Activated T-helper 1 cell treated with anti-CD3 and anti-CD28 coated beads, Interleukin-12 subunit alpha, Interleukin-12 subunit beta, Interleukin-2, Interleukin-4 antibody, amounts not matched to agents 30 ng/mL and 10 ng/mL and 1 ng/mL, durations not matched to agents 14 hours and 24 hours and 36 hours (primary cell): ENCODE measurements at regions of chr17 and their contacts with region 1.

Region 1: DNA sequence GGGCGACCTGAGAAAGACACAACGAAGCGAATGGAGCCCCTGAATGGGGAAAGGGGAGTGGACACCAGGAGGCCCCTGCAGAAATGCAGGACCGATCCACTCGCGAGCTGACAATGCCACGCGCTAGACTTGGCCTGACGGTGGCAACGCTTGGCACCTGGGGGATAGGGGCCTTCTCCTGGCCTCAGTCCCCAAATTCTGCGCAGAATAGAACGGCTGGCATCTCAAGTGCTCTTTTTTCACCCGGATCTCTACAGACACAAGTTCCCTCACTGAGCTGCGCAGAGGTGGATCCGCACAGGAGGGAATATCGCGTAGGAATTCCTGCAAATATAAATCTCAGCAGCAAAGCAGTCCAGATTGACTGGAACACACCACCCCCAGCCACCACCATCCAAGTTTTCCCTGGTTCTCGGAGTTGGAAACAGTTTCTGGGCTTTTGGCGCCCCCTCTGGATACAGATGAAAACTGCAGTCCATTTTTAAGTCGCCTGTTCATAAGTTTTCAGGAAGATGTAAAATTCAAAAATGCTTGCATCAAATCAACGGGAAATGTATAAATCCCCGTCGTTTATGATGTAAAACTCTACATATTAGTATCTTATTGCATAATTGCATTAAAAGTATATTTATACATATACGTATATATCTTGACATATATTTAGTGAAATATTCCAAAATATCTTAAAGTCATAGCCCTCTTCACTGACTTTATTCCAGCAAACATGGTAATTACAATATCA is 2.3 kb upstream of the SOX9 start:
- DNase-seq: no peak
- H3K4me3 Mint-ChIP-seq: no peak overlapping the region
- H3K27ac Mint-ChIP-seq: peak overlapping the region; percentile 23
- H3K4me1 Mint-ChIP-seq: no peaks in the 10 kb centered on the region
- H3K27me3 Mint-ChIP-seq: peaks cover 65% of the 10 kb centered on the region

Region 2: DNA sequence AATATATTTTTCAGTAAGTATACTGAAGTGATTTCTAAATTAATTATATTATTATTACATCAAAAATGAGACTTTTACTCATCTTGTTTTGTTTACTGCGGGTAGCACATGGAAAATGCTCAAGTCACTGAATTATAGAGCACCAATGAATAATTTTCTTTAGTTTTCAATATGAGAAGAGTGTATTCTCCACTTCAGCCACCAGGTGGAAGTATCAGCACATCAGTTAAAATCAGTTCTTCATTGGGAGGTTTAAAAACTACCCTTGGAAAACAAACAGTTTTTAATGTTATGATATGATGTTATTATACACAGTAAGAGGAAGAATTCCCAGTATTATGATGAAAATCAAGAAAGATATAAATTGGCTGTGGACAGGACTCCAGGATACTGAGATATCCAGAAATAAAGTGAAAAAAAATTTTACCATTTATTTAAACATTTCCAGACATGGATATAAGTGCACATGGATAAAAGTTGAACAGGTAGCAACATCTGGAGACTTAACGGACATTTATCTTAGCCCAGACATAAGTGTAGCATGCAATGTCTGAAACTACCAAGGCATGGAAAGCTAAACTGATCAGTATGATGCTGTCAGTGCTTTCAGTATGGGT is 1481.9 kb before region 1 on chr17:
- intact Hi-C with region 1: loop called (anchors 5 kb)
- DNase-seq: no peak
- H3K4me3 Mint-ChIP-seq: no peak overlapping the region
- H3K27ac Mint-ChIP-seq: no peak overlapping the region
- H3K4me1 Mint-ChIP-seq: no peaks in the 10 kb centered on the region
- H3K27me3 Mint-ChIP-seq: no peaks in the 10 kb centered on the region

Region 3: GRCh38 chr17:72136693-72137092 is 18.2 kb after region 1 on chr17:
- intact Hi-C with region 1: no loop called
- DNase-seq: no peak
- H3K4me3 Mint-ChIP-seq: no peak overlapping the region
- H3K27ac Mint-ChIP-seq: no peak overlapping the region
- H3K4me1 Mint-ChIP-seq: no peaks in the 10 kb centered on the region
- H3K27me3 Mint-ChIP-seq: no peaks in the 10 kb centered on the region